H1 (cell line): ENCODE measurements at regions of chr6 and their contacts with region 1.

Region 1: GRCh38 chr6:136289579-136290409 is at the start of gene BCLAF1:
- DNase-seq: peak; percentile 98 to 99
- H3K4me3 ChIP-seq: peak within 1 kb of the TSS; percentile 85 to 100 (median 92)
- H3K27ac ChIP-seq: peak within 1 kb of the TSS; percentile 99
- H3K4me1 ChIP-seq: peaks cover 0 to 5% (median 2%) of the 10 kb centered on the region in 4 experiments; a peak in 4 of 7 replicates
- H3K27me3 ChIP-seq: no peaks in the 10 kb centered on the region
- CTCF ChIP-seq: no peak
- EP300 ChIP-seq: peak in 1 of 2 experiments; percentile 38; a peak in 1 of 3 replicates
- POLR2A ChIP-seq: peak; percentile 99 to 100
- RAD21 ChIP-seq: no peak
- total RNA-seq, gene BCLAF1: 230 and 231 TPM in 2 replicates

Region 2: DNA sequence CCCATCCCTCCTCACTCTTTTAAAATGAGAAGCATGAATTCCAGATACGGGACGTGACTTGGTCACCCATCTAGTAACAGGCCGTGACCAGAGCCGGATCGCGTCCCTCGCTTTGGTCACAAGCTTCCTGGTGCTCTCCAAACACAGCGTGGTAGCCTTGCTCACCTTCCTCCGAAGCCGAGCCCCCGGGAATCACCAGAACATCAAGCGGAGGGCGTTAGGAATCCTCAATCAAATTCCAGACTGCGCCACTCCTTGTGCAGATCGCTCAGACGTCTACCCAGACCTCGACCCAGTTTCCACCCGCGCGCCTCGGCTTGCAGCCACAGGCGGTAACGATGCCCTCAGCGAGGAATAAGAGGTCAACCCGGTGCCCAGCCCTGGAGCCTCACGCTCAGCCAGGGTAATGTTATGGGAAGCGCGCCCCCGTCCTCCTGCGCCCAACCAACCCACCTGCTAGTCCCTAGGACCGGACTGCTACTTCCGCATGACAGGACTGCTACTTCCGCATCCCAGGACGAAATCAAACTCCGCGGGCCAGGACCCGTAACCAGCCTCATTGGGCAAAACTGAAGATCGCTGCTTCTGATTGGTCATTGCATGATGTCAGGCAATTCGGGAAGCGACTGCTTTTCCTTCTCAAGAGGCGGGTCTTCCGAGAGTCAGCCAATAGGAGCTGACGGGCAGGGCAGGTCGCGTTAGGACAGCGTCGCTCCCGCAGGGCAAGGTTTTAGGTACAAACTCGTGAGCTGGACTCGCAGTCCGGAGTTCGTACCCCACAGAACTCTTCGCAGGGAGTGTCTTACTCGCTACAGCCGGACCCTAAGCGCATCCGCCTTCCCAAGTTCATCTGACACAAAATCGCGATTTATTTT is 39.7 kb before region 1 on chr6 and contains the start of gene MTFR2:
- CTCF ChIA-PET with region 1: interaction called, 3 read pairs
- POLR2A ChIA-PET with region 1: interaction called, 115 read pairs
- DNase-seq: peak; percentile 89 to 97
- H3K4me3 ChIP-seq: peak within 1 kb of the TSS; percentile 70 to 97 (median 82)
- H3K27ac ChIP-seq: no peak within 1 kb of the TSS
- H3K4me1 ChIP-seq: peaks cover 0 to 3% (median 0%) of the 10 kb centered on the region in 4 experiments; a peak in 2 of 7 replicates
- H3K27me3 ChIP-seq: no peaks in the 10 kb centered on the region
- CTCF ChIP-seq: peak in 1 of 3 experiments; percentile 1; a peak in 1 of 4 replicates
- EP300 ChIP-seq: peak in 1 of 2 experiments; percentile 16; a peak in 1 of 3 replicates
- POLR2A ChIP-seq: peak; percentile 31 to 60
- RAD21 ChIP-seq: no peak
- total RNA-seq, gene MTFR2: 8.2 and 8.5 TPM in 2 replicates

Region 3: DNA sequence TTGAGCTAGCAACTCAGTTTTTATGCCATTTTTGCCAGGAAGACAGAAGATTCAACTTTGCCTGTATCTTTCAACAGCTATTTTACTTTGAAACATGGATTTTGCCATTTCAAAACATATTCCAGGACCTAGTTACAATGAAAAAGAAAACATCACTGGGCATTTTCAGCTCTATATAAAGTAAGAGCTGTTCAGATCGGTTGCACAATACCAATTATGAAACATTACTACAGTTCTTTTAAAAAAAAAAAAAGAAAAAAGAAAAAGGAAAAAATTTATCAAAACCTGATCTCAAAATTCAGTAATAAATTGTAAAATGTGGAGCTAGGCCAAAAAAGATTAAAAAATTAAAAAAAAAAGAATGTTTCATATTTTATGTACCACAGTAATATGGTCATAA is 15.7 kb before region 1 on chr6:
- CTCF ChIA-PET with region 1: interaction called, 5 read pairs
- POLR2A ChIA-PET with region 1: interaction called, 16 read pairs
- DNase-seq: no peak
- H3K4me3 ChIP-seq: no peak overlapping the region
- H3K27ac ChIP-seq: no peak overlapping the region
- H3K4me1 ChIP-seq: no peaks in the 10 kb centered on the region
- H3K27me3 ChIP-seq: no peaks in the 10 kb centered on the region
- CTCF ChIP-seq: no peak
- EP300 ChIP-seq: no peak
- POLR2A ChIP-seq: no peak
- RAD21 ChIP-seq: no peak

Region 4: GRCh38 chr6:136317021-136317694 is 27.4 kb after region 1 on chr6:
- CTCF ChIA-PET with region 1: interaction called, 19 read pairs
- POLR2A ChIA-PET with region 1: interaction called, 32 read pairs
- DNase-seq: peak in 1 of 2 experiments; percentile 25
- H3K4me3 ChIP-seq: no peak overlapping the region
- H3K27ac ChIP-seq: no peak overlapping the region
- H3K4me1 ChIP-seq: no peaks in the 10 kb centered on the region
- H3K27me3 ChIP-seq: no peaks in the 10 kb centered on the region
- CTCF ChIP-seq: peak; percentile 17 to 80 (median 72)
- EP300 ChIP-seq: no peak
- POLR2A ChIP-seq: no peak
- RAD21 ChIP-seq: peak; percentile 85 to 86

Region 5: DNA sequence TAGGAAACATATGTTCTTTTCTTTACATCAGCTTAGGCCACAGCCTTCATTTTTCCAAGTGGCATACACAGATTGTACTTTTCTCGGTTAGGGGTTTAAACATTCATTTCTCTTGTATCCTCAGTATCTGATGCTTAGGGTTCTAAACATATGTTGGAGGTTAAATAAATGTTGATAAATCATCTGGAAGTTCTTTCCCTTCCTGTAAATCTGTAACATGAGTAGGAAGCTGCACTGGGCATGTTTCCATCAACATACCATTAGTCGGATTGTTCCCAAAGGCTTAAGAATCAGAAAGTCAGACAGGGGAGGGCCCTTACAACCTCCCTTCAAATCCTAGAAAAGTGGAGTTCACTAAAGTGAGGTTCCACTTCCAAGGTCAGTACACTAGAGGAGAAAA is 54.6 kb after region 1 on chr6:
- CTCF ChIA-PET with region 1: interaction called, 10 read pairs
- POLR2A ChIA-PET with region 1: interaction called, 4 read pairs
- DNase-seq: no peak
- H3K4me3 ChIP-seq: no peak overlapping the region
- H3K27ac ChIP-seq: no peak overlapping the region
- H3K4me1 ChIP-seq: no peaks in the 10 kb centered on the region
- H3K27me3 ChIP-seq: peaks cover 0 to 1% (median 0%) of the 10 kb centered on the region in 4 experiments; a peak in 1 of 7 replicates
- CTCF ChIP-seq: no peak
- EP300 ChIP-seq: no peak
- POLR2A ChIP-seq: no peak
- RAD21 ChIP-seq: no peak